B cell (primary cell): ENCODE measurements at regions of chr1 and their contacts with region 1.

Region 1: GRCh38 chr1:32063261-32063681 is 9.5 kb upstream of the TMEM39B start:
- DNase-seq: peak; percentile 56
- ATAC-seq: peak; percentile 53
- H3K4me3 ChIP-seq: no peak overlapping the region
- H3K4me3 Mint-ChIP-seq: no peak overlapping the region
- H3K27ac ChIP-seq: no peak overlapping the region
- H3K27ac Mint-ChIP-seq: no peak overlapping the region
- H3K4me1 ChIP-seq: peaks cover 8 to 11% of the 10 kb centered on the region in 2 donors
- H3K4me1 Mint-ChIP-seq: peaks cover 5% of the 10 kb centered on the region
- H3K27me3 ChIP-seq: no peaks in the 10 kb centered on the region
- H3K27me3 Mint-ChIP-seq: no peaks in the 10 kb centered on the region
- CTCF ChIP-seq: peak; percentile 70

Region 2: GRCh38 chr1:31663622-31664452 is 399.4 kb before region 1 on chr1:
- CTCF ChIA-PET with region 1: interaction called, 9 read pairs
- POLR2A ChIA-PET with region 1: no interaction called
- intact Hi-C with region 1: loop called (anchors 2 kb)
- DNase-seq: peak; percentile 73
- ATAC-seq: peak; percentile 85
- H3K4me3 ChIP-seq: no peak overlapping the region
- H3K4me3 Mint-ChIP-seq: no peak overlapping the region
- H3K27ac ChIP-seq: no peak overlapping the region
- H3K27ac Mint-ChIP-seq: no peak overlapping the region
- H3K4me1 ChIP-seq: no peaks in the 10 kb centered on the region
- H3K4me1 Mint-ChIP-seq: no peaks in the 10 kb centered on the region
- H3K27me3 ChIP-seq: peaks cover 0 to 6% (median 0%) of the 10 kb centered on the region in 4 experiments
- H3K27me3 Mint-ChIP-seq: peaks cover 5% of the 10 kb centered on the region
- CTCF ChIP-seq: peak; percentile 86

Region 3: GRCh38 chr1:31977385-31978131 is 85.7 kb before region 1 on chr1:
- CTCF ChIA-PET with region 1: interaction called, 4 read pairs
- POLR2A ChIA-PET with region 1: interaction called, 4 read pairs
- intact Hi-C with region 1: loop called (anchors 1 kb)
- DNase-seq: no peak
- ATAC-seq: no peak
- H3K4me3 ChIP-seq: no peak overlapping the region
- H3K4me3 Mint-ChIP-seq: no peak overlapping the region
- H3K27ac ChIP-seq: no peak overlapping the region
- H3K27ac Mint-ChIP-seq: peak overlapping the region; percentile 23
- H3K4me1 ChIP-seq: peaks cover 21% of the 10 kb centered on the region in 2 donors
- H3K4me1 Mint-ChIP-seq: peaks cover 21% of the 10 kb centered on the region
- H3K27me3 ChIP-seq: no peaks in the 10 kb centered on the region
- H3K27me3 Mint-ChIP-seq: no peaks in the 10 kb centered on the region
- CTCF ChIP-seq: no peak

Region 4: DNA sequence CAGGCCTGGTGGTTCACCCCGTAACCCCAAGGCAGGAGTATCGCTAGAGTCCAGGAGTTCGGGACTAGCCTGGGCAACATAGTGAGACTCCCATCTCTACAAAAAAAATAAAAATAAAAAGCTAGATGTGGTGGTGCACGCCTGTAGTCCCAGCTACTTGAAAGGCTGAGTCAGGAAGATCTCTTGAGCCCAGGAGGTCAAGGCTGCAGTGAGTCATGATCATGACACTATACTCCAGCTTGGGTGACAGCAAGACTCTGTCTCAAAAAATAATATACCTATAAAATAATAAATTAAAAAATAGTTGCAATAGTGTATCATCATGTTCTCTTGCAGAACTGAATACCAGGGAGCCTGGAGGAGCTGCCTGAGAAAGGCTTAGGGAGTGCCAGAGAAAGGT is 10.4 kb before region 1 on chr1:
- CTCF ChIA-PET with region 1: interaction called, 12 read pairs
- POLR2A ChIA-PET with region 1: no interaction called
- intact Hi-C with region 1: no loop called
- DNase-seq: no peak
- ATAC-seq: no peak
- H3K4me3 ChIP-seq: no peak overlapping the region
- H3K4me3 Mint-ChIP-seq: no peak overlapping the region
- H3K27ac ChIP-seq: no peak overlapping the region
- H3K27ac Mint-ChIP-seq: no peak overlapping the region
- H3K4me1 ChIP-seq: no peaks in the 10 kb centered on the region
- H3K4me1 Mint-ChIP-seq: no peaks in the 10 kb centered on the region
- H3K27me3 ChIP-seq: no peaks in the 10 kb centered on the region
- H3K27me3 Mint-ChIP-seq: no peaks in the 10 kb centered on the region
- CTCF ChIP-seq: no peak